GM12878 (cell line): ENCODE measurements at regions of chr1 and their contacts with region 1.

Region 1: GRCh38 chr1:240732390-240732789 is 120.4 kb upstream of the GREM2 start:
- DNase-seq: no peak
- ATAC-seq: peak; percentile 92
- H3K4me3 ChIP-seq: no peak overlapping the region
- H3K27ac ChIP-seq: no peak overlapping the region
- H3K4me1 ChIP-seq: no peaks in the 10 kb centered on the region
- H3K27me3 ChIP-seq: no peaks in the 10 kb centered on the region
- CTCF ChIP-seq: peak; percentile 53 to 61 (median 59); a peak in 5 of 6 replicates
- EP300 ChIP-seq: no peak
- POLR2A ChIP-seq: no peak
- RAD21 ChIP-seq: peak; percentile 70

Region 2: GRCh38 chr1:240946926-240947325 is 214.5 kb after region 1 on chr1:
- CTCF ChIA-PET with region 1: interaction called, 6 read pairs
- POLR2A ChIA-PET with region 1: no interaction called
- RAD21 ChIA-PET with region 1: interaction called, 3 read pairs
- SMC1A ChIA-PET with region 1: interaction called, 7 read pairs
- in situ Hi-C with region 1: loop called (anchors 5 kb)
- intact Hi-C with region 1: loop called (anchors 1 kb)
- DNase-seq: no peak
- ATAC-seq: peak; percentile 89
- H3K4me3 ChIP-seq: no peak overlapping the region
- H3K27ac ChIP-seq: no peak overlapping the region
- H3K4me1 ChIP-seq: no peaks in the 10 kb centered on the region
- H3K27me3 ChIP-seq: no peaks in the 10 kb centered on the region
- CTCF ChIP-seq: peak; percentile 26 to 53 (median 47); a peak in 3 of 6 replicates
- EP300 ChIP-seq: no peak
- POLR2A ChIP-seq: no peak
- RAD21 ChIP-seq: peak; percentile 51